ENCODE measurements at regions of chr1 and their contacts with region 1.

Region 1: DNA sequence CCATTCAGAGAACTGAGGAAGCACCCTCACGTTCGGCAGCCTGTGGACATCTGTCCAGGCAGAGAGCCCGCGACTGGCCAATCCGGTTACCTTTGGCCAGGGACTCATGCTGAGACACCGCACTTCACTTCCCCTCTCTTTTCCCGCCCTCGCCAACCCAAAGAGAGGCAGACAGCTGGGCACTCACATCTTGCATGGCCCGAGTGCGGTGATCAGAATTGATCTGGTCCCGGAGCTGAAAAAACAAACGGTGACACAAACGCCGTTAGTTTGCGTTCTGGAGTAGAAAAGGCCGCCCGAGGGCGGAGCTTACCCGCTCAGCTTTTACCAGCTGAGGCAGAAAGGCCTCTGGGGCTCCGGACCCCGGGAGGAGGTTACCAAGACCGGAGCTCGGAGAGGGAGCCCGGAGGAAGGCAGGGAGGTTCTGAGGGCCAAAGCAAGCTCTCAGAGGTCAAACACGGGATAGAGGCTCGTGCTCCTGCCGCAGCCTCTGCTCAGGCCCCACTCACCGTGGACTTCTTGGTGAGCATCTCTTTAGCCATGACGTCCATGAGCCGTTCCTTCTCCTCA is 376 bp downstream of the SF3A3 start:
- DNase-seq: no peak
- ATAC-seq: peak; percentile 26
- H3K4me3 Mint-ChIP-seq: peak overlapping the region; percentile 94
- H3K27ac Mint-ChIP-seq: peak overlapping the region; percentile 88
- H3K4me1 Mint-ChIP-seq: peaks cover 25% of the 10 kb centered on the region
- H3K27me3 Mint-ChIP-seq: peaks cover 2% of the 10 kb centered on the region
- CTCF ChIP-seq: no peak

Region 2: DNA sequence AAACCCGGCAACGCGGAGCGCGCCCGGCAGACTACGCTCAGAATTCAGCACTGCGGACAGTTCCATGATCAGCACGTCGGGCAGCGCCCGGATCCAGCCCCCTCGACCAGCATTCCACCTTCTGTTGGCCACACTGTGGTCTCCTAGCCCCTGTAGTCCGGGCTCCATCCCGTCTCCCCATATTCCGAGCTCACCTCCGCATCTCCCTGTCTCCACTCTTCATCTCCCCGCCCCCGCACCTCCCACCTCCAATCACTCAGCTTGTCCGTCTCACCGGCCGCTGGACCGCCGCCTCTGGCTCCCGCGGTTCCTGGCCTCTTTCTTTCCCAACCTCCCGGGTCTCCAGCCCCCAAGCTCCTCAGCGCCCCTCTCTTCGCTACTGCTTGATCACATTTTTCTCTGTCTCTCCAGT is 225.0 kb before region 1 on chr1:
- CTCF ChIA-PET with region 1: no interaction called
- POLR2A ChIA-PET with region 1: no interaction called
- intact Hi-C with region 1: no loop called
- DNase-seq: no peak
- ATAC-seq: no peak
- H3K4me3 Mint-ChIP-seq: no peak overlapping the region
- H3K27ac Mint-ChIP-seq: no peak overlapping the region
- H3K4me1 Mint-ChIP-seq: peaks cover 24% of the 10 kb centered on the region
- H3K27me3 Mint-ChIP-seq: peaks cover 72% of the 10 kb centered on the region
- CTCF ChIP-seq: no peak

Region 3: GRCh38 chr1:37859507-37860345 is 129.7 kb before region 1 on chr1 and contains the start of gene MTF1:
- CTCF ChIA-PET with region 1: interaction called, 5 read pairs
- POLR2A ChIA-PET with region 1: interaction called, 8 read pairs
- intact Hi-C with region 1: loop called (anchors 1 kb)
- DNase-seq: peak; percentile 88
- ATAC-seq: peak; percentile 98
- H3K4me3 Mint-ChIP-seq: peak within 1 kb of the TSS; percentile 93
- H3K27ac Mint-ChIP-seq: peak within 1 kb of the TSS; percentile 89
- H3K4me1 Mint-ChIP-seq: peaks cover 29% of the 10 kb centered on the region
- H3K27me3 Mint-ChIP-seq: no peaks in the 10 kb centered on the region
- CTCF ChIP-seq: peak; percentile 19
- total RNA-seq, gene MTF1: 30.5 and 36.2 TPM in 2 replicates

Region 4: DNA sequence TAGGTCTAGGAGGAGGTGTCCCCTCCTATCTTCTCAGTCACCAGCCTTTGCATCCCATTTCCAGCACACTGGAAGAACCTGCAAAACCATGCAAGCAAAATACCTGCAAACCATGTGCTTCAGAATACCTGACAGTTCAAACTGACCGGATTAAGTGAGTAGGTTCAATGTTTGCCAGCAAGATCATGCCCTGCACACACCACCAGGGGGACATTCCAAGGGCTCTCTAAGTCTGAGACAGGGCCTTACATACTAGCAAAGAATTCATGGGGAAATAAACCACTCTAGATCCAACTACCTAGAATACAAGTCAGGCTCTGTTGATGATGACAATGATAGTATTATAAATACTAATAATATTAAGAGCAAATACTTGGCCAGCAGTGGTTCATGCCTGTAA is 70.2 kb before region 1 on chr1:
- CTCF ChIA-PET with region 1: no interaction called
- POLR2A ChIA-PET with region 1: interaction called, 4 read pairs
- intact Hi-C with region 1: loop called (anchors 2 kb)
- DNase-seq: no peak
- ATAC-seq: no peak
- H3K4me3 Mint-ChIP-seq: no peak overlapping the region
- H3K27ac Mint-ChIP-seq: no peak overlapping the region
- H3K4me1 Mint-ChIP-seq: peaks cover 54% of the 10 kb centered on the region
- H3K27me3 Mint-ChIP-seq: no peaks in the 10 kb centered on the region
- CTCF ChIP-seq: no peak

Region 5: DNA sequence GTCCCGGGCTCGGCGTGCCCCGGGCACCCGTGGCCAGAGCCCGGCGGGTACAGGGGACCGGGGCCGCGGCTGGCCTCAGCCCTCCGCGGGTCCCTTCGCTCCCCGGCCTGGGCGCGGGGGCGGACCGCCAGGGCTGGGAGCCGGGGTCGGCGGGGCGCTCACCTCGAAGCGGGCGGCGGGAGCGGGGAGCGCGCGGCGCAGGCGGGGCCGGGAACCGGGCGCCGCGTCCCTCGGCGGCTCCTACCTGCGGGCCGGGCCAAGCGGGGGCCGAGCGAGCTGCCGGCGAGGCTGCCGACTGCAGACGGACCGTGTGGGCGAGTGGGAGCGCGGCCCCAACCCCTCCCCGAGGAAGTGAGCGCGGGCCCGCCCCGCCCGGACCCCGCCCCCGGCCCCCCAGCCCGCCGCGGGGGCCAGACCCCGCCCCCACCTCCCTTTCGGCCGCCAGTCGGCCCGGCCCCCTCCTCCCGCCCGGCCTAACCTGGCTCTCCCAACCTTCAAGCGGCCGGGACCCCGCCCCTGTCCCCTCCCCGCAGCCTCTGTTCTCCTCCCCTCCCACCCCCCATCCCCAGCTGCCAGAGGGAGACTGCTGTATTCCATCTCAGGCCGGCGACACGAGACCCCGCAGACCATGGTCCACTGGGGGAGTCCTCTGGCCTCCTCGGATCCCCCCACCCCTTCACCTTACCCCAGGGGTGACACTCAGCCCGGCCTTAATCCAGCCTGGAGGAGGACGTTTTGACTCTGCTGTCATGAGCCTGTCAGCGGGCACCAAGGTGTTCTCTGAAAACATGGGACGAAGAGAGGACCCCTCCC is 16.0 kb after region 1 on chr1 and contains the start of gene FHL3:
- CTCF ChIA-PET with region 1: interaction called, 8 read pairs
- POLR2A ChIA-PET with region 1: interaction called, 7 read pairs
- intact Hi-C with region 1: loop called (anchors 2 kb)
- DNase-seq: peak; percentile 32
- ATAC-seq: peak; percentile 72
- H3K4me3 Mint-ChIP-seq: peak within 1 kb of the TSS; percentile 79
- H3K27ac Mint-ChIP-seq: no peak within 1 kb of the TSS
- H3K4me1 Mint-ChIP-seq: peaks cover 7% of the 10 kb centered on the region
- H3K27me3 Mint-ChIP-seq: peaks cover 9% of the 10 kb centered on the region
- CTCF ChIP-seq: no peak
- total RNA-seq, gene FHL3: 1.4 and 1.6 TPM in 2 replicates

Region 6: DNA sequence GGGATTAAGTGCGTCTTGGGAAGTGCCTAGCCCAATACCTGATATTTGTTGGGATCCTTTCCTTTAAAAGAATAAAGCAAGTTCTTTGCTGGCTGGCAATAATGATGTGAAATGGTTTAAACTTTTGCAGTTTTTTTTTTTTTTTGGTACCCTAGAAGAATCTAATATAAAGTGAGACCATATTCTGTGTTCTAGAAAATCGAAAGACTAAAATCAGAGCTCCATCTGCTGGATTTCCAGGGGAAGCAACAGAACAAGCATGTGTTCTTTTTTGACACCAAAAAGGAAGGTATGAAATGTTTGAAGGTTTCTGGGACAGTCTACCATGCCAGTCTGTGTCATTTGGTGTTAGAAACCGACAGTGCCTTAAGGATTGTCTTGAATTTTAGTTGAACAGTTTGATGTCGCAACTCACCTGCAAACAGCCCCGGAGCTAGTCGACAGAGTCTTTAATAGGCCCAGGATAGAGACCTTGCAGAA is 29.5 kb after region 1 on chr1:
- CTCF ChIA-PET with region 1: interaction called, 4 read pairs
- POLR2A ChIA-PET with region 1: interaction called, 8 read pairs
- intact Hi-C with region 1: loop called (anchors 1 kb)
- DNase-seq: no peak
- ATAC-seq: peak; percentile 50
- H3K4me3 Mint-ChIP-seq: no peak overlapping the region
- H3K27ac Mint-ChIP-seq: no peak overlapping the region
- H3K4me1 Mint-ChIP-seq: peaks cover 4% of the 10 kb centered on the region
- H3K27me3 Mint-ChIP-seq: no peaks in the 10 kb centered on the region
- CTCF ChIP-seq: no peak

Region 7: GRCh38 chr1:38502758-38503157 is 513.3 kb after region 1 on chr1:
- CTCF ChIA-PET with region 1: interaction called, 8 read pairs
- POLR2A ChIA-PET with region 1: no interaction called
- intact Hi-C with region 1: loop called (anchors 1 kb)
- DNase-seq: no peak
- ATAC-seq: peak; percentile 73
- H3K4me3 Mint-ChIP-seq: no peak overlapping the region
- H3K27ac Mint-ChIP-seq: no peak overlapping the region
- H3K4me1 Mint-ChIP-seq: peaks cover 18% of the 10 kb centered on the region
- H3K27me3 Mint-ChIP-seq: peaks cover 16% of the 10 kb centered on the region
- CTCF ChIP-seq: no peak

Measured in activated B cell treated with CpG ODN at 0.5 μM for 24 hours (primary cell).